ENCODE measurements at regions of chr6 and their contacts with region 1.

Region 1: DNA sequence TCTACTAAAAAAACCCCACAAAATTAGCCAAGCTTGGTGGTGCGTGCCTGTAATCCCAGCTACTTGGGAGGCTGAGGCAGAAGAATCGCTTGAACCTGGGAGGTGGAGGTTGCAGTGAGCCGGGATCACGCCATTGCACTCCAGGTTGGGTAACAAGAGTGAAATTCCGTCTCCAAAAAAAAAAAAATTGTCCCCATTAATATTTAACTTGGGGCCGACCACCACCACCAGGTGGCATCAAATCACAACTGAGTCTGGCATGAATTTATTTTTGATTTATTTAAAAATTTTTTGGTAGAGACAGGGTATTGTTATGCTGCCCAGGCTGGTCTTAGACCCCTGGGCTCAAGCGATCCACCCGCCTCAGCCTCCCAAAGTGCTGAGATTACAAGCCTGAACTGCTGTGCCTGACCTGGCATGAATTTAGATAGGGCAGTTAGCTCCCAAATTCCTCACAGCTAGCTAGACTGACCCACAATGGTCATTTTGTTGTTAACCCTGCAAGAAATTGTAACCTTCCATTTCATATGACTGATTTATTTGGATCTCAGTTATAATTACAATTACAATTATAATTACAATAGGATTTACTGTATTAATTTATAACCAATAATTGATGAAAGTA is 17.1 kb upstream of the BEND3 start:
- DNase-seq: peak in 1 of 4 experiments; percentile 43
- ATAC-seq: no peak
- H3K4me3 ChIP-seq: no peak overlapping the region
- H3K27ac ChIP-seq: no peak overlapping the region
- H3K4me1 ChIP-seq: peaks cover 9 to 10% of the 10 kb centered on the region in 2 experiments; a peak in 4 of 5 replicates
- H3K27me3 ChIP-seq: no peaks in the 10 kb centered on the region
- CTCF ChIP-seq: peak; percentile 35 to 56 (median 52); a peak in 4 of 6 replicates
- EP300 ChIP-seq: no peak
- POLR2A ChIP-seq: no peak
- RAD21 ChIP-seq: peak; percentile 39 to 61

Region 2: GRCh38 chr6:107080036-107080435 is 52.4 kb before region 1 on chr6:
- CTCF ChIA-PET with region 1: no interaction called
- POLR2A ChIA-PET with region 1: no interaction called
- in situ Hi-C with region 1: no loop called
- intact Hi-C with region 1: no loop called
- DNase-seq: no peak
- ATAC-seq: peak; percentile 75
- H3K4me3 ChIP-seq: no peak overlapping the region
- H3K27ac ChIP-seq: no peak overlapping the region
- H3K4me1 ChIP-seq: peaks cover 0 to 3% of the 10 kb centered on the region in 2 experiments; a peak in 2 of 5 replicates
- H3K27me3 ChIP-seq: no peaks in the 10 kb centered on the region
- CTCF ChIP-seq: peak; percentile 30 to 37 (median 37); a peak in 4 of 6 replicates
- EP300 ChIP-seq: no peak
- POLR2A ChIP-seq: no peak
- RAD21 ChIP-seq: no peak

Region 3: GRCh38 chr6:107634324-107635056 is 502.0 kb after region 1 on chr6:
- CTCF ChIA-PET with region 1: interaction called, 5 read pairs
- POLR2A ChIA-PET with region 1: no interaction called
- in situ Hi-C with region 1: no loop called
- intact Hi-C with region 1: loop called (anchors 10 kb)
- DNase-seq: no peak
- ATAC-seq: no peak
- H3K4me3 ChIP-seq: no peak overlapping the region
- H3K27ac ChIP-seq: no peak overlapping the region
- H3K4me1 ChIP-seq: peaks cover 0 to 6% of the 10 kb centered on the region in 2 experiments; a peak in 1 of 5 replicates
- H3K27me3 ChIP-seq: peaks cover 7 to 26% of the 10 kb centered on the region in 2 experiments
- CTCF ChIP-seq: no peak
- EP300 ChIP-seq: no peak
- POLR2A ChIP-seq: no peak
- RAD21 ChIP-seq: no peak